PC-3 (cell line): ENCODE measurements at regions of chr9 and their contacts with region 1.

Region 1: GRCh38 chr9:76866689-76867088 is 39.2 kb downstream of the PRUNE2 start:
- DNase-seq: peak; percentile 91
- ATAC-seq: peak; percentile 99
- H3K4me3 ChIP-seq: peak overlapping the region; percentile 50; the same call in 1 of the 2 replicates
- H3K27ac ChIP-seq: peak overlapping the region; percentile 62
- H3K4me1 ChIP-seq: peaks cover 17% of the 10 kb centered on the region
- H3K27me3 ChIP-seq: no peaks in the 10 kb centered on the region
- CTCF ChIP-seq: no peak

Region 2: DNA sequence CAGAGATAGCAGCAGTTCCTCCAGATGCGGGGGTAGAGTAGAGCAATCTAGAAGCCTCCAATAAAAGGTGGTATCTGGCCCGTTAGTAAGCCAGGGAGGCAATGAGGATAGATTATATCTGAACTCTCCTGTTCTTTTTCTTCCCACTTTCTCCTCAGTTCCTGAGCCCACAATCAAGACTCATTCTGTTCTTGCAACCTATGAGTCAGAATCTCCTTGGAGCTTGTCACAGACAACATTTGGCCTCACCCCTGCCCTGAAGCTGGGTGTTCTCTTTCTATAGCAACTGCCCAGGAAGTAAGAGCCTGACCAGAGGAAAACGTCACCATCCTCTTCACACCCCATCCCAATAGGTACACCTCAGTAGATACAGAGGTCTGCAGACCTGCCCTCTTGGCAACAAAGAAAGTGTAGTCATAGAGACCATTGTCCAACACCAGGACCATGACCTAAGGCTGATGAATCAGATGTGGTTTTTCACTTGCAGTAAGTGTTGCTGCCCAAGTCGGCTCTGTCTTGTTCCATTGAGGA is 178.8 kb before region 1 on chr9:
- CTCF ChIA-PET with region 1: no interaction called
- POLR2A ChIA-PET with region 1: no interaction called
- intact Hi-C with region 1: no loop called
- DNase-seq: peak; percentile 30
- ATAC-seq: no peak
- H3K4me3 ChIP-seq: no peak overlapping the region
- H3K27ac ChIP-seq: no peak overlapping the region
- H3K4me1 ChIP-seq: no peaks in the 10 kb centered on the region
- H3K27me3 ChIP-seq: peaks cover 14% of the 10 kb centered on the region; the same call in 1 of the 2 replicates
- CTCF ChIP-seq: no peak

Region 3: GRCh38 chr9:76744336-76744735 is 122.4 kb before region 1 on chr9:
- CTCF ChIA-PET with region 1: no interaction called
- POLR2A ChIA-PET with region 1: no interaction called
- intact Hi-C with region 1: no loop called
- DNase-seq: no peak
- ATAC-seq: no peak
- H3K4me3 ChIP-seq: no peak overlapping the region
- H3K27ac ChIP-seq: no peak overlapping the region
- H3K4me1 ChIP-seq: no peaks in the 10 kb centered on the region
- H3K27me3 ChIP-seq: peaks cover 16% of the 10 kb centered on the region
- CTCF ChIP-seq: no peak

Region 4: GRCh38 chr9:76818271-76818670 is 48.4 kb before region 1 on chr9:
- CTCF ChIA-PET with region 1: no interaction called
- POLR2A ChIA-PET with region 1: no interaction called
- intact Hi-C with region 1: loop called (anchors 1 kb)
- DNase-seq: peak; percentile 92
- ATAC-seq: peak; percentile 100
- H3K4me3 ChIP-seq: no peak overlapping the region; the same call in 1 of the 2 replicates
- H3K27ac ChIP-seq: peak overlapping the region; percentile 98
- H3K4me1 ChIP-seq: peaks cover 21% of the 10 kb centered on the region
- H3K27me3 ChIP-seq: no peaks in the 10 kb centered on the region; the same call in 1 of the 2 replicates
- CTCF ChIP-seq: no peak

Region 5: GRCh38 chr9:76996700-76997099 is 130.0 kb after region 1 on chr9:
- CTCF ChIA-PET with region 1: no interaction called
- POLR2A ChIA-PET with region 1: no interaction called
- intact Hi-C with region 1: no loop called
- DNase-seq: peak; percentile 18
- ATAC-seq: peak; percentile 49; the same call in 1 of the 2 replicates
- H3K4me3 ChIP-seq: no peak overlapping the region
- H3K27ac ChIP-seq: no peak overlapping the region
- H3K4me1 ChIP-seq: no peaks in the 10 kb centered on the region
- H3K27me3 ChIP-seq: no peaks in the 10 kb centered on the region
- CTCF ChIP-seq: peak; percentile 58

Region 6: DNA sequence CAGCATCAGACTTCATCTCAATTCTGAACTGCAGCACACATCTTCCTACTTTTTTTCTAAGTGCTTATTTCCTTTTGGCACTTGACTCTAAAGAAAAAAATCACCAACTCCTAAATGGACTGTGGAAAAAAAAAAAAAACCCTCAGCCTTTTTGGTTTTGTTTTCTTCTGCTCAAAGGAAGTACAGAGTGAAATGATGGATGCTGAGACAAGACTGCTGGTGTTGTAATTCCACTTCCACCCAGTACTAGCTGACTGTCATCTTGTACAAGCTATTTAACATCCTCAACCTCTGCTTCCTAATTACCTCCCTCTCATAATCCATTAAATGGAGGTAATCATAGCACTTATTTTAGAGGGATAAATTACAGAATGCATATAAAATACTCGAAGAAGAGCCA is 953.0 kb after region 1 on chr9:
- CTCF ChIA-PET with region 1: interaction called, 19 read pairs
- POLR2A ChIA-PET with region 1: no interaction called
- intact Hi-C with region 1: no loop called
- DNase-seq: no peak
- ATAC-seq: no peak
- H3K4me3 ChIP-seq: no peak overlapping the region
- H3K27ac ChIP-seq: peak overlapping the region; percentile 28; the same call in 1 of the 2 replicates
- H3K4me1 ChIP-seq: peaks cover 22% of the 10 kb centered on the region
- H3K27me3 ChIP-seq: no peaks in the 10 kb centered on the region
- CTCF ChIP-seq: no peak